Activated B cell treated with CpG ODN at 0.5 μM for 24 hours (primary cell): ENCODE measurements at regions of chr1 and their contacts with region 1.

Region 1: DNA sequence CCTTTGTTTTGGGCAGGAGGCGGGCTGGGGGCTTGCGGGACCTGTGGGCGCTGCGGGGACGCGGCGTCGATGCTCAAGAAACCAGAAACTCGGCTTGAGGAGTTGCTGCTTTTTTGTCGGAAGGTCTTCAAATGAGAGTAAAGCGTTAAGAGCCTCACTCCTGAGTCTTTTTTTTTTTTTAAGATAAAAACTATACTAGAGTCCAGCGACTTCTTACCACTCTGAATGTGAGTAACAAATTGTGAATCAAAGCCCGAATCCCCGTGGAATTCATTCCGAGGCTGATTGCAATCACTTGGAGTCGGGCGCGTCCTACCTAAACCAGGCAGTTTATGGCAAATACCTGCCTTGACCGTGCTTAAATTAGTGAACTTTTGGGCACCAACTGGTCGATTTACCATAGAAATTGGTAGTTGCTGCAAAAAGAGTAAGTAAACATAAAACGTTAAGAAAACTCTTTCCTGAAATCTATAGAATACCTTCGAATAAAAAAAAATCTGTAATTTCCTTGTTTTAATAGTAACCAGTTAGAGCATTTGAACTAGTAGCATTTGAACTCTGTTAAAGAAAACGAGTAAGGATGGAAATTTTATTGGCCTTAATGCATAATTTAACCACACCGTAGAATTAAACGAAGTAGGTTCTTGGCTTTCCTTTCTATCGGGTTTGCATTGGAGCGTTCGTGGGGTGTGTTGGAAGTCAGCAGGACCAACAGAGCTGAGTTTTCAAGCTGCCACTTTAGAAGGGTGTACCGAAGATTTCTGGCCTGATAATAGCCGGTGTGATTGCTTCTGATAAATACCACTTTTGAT is 769 bp downstream of the GPSM2 start:
- DNase-seq: no peak
- ATAC-seq: no peak
- H3K4me3 Mint-ChIP-seq: peak overlapping the region; percentile 97
- H3K27ac Mint-ChIP-seq: peak overlapping the region; percentile 85
- H3K4me1 Mint-ChIP-seq: peaks cover 13% of the 10 kb centered on the region
- H3K27me3 Mint-ChIP-seq: no peaks in the 10 kb centered on the region
- CTCF ChIP-seq: no peak

Region 2: DNA sequence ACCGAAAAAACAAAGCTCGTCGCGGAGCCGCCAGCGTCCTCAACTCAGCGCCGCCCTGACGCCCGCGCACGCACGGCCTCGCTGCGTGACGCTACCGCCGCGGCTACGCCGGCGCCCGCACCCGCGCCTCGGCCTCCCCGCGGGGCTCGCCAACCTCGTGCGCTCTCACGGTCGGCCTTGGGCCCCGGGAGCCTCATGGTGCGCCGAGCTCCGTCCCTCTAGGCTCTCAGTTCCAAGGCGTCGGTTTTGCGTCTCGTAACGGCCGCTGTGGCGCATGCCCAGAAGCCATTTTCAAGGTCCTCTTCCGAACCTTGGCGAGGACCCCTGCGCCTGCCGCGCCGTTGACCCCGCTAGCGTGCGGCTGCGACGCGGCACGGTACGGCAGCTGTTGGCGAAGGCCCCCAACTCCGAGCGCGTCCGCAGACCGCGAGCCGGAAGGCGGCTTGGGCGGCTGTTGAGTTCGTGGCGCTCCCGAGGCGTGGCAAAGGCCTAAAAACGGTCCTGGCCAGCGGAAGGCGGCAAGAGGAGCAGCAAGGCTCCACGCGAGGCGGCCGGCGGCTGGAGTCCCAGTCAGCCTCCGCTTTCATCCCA is 216.4 kb before region 1 on chr1 and contains the start of gene HENMT1:
- CTCF ChIA-PET with region 1: no interaction called
- POLR2A ChIA-PET with region 1: no interaction called
- intact Hi-C with region 1: loop called (anchors 5 kb)
- DNase-seq: peak; percentile 75
- ATAC-seq: peak; percentile 82
- H3K4me3 Mint-ChIP-seq: peak within 1 kb of the TSS; percentile 86
- H3K27ac Mint-ChIP-seq: peak within 1 kb of the TSS; percentile 90
- H3K4me1 Mint-ChIP-seq: peaks cover 12% of the 10 kb centered on the region
- H3K27me3 Mint-ChIP-seq: no peaks in the 10 kb centered on the region
- CTCF ChIP-seq: no peak
- total RNA-seq, gene HENMT1: 6.1 and 6.4 TPM in 2 replicates

Region 3: DNA sequence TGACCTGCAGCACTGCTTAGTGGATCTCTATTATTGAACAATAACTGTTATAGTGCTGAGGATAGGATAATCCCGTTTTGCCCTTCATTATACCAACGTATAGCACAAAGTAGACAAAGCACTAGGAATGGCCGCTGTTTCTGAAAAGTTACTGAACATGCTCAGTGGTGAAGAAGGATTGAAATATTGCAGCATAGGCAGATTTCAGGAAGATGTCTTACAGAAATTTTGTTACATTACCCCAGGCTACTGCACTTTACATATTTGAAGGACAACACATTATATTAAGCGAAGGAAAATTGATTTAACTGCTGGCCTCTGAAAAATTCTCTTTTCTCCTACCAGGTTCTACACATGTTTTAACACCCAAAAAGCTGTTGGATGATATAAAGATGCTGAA is 69.1 kb before region 1 on chr1:
- CTCF ChIA-PET with region 1: no interaction called
- POLR2A ChIA-PET with region 1: no interaction called
- intact Hi-C with region 1: loop called (anchors 5 kb)
- DNase-seq: no peak
- ATAC-seq: no peak
- H3K4me3 Mint-ChIP-seq: no peak overlapping the region
- H3K27ac Mint-ChIP-seq: no peak overlapping the region
- H3K4me1 Mint-ChIP-seq: no peaks in the 10 kb centered on the region
- H3K27me3 Mint-ChIP-seq: no peaks in the 10 kb centered on the region
- CTCF ChIP-seq: no peak

Region 4: GRCh38 chr1:108862698-108863477 is 14.7 kb before region 1 on chr1:
- CTCF ChIA-PET with region 1: no interaction called
- POLR2A ChIA-PET with region 1: no interaction called
- intact Hi-C with region 1: loop called (anchors 1 kb)
- DNase-seq: no peak
- ATAC-seq: peak; percentile 96
- H3K4me3 Mint-ChIP-seq: no peak overlapping the region
- H3K27ac Mint-ChIP-seq: peak overlapping the region; percentile 81
- H3K4me1 Mint-ChIP-seq: peaks cover 22% of the 10 kb centered on the region
- H3K27me3 Mint-ChIP-seq: peaks cover 1% of the 10 kb centered on the region
- CTCF ChIP-seq: no peak

Region 5: DNA sequence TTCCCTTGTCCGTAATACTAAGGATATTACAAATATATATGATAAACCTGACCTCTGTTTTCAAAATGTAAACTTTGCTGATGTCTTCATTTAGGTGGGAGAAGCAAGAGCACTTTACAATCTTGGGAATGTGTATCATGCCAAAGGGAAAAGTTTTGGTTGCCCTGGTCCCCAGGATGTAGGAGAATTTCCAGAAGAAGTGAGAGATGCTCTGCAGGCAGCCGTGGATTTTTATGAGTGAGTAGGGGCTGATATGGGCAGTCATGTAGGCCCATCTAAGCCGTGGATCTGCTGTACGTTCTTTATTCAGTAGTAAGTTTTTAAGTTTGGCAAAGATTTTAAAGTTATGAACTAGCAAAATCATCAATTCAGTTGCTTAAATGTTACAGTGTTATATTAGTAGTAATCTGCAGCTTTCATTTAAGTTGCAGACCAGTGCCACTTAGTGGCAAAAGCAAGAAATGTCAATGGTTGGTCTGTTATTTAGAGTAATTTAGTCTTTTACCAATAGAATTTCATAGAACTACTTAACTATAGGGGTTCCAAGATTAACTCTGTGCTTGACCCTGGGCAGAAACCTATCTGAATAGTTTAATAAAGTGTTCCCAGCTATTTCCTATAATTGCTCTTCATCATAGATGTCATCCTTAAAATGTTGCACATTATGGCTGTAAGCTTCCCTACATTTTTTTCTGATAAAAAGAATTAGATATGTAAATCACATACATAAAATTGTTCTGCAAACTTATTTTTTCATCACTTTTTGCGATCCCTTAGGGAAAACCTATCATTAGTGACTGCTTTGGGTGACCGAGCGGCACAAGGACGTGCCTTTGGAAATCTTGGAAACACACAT is 20.5 kb after region 1 on chr1:
- CTCF ChIA-PET with region 1: interaction called, 3 read pairs
- POLR2A ChIA-PET with region 1: no interaction called
- intact Hi-C with region 1: loop called (anchors 1 kb)
- DNase-seq: no peak
- ATAC-seq: peak; percentile 66
- H3K4me3 Mint-ChIP-seq: no peak overlapping the region
- H3K27ac Mint-ChIP-seq: no peak overlapping the region
- H3K4me1 Mint-ChIP-seq: no peaks in the 10 kb centered on the region
- H3K27me3 Mint-ChIP-seq: no peaks in the 10 kb centered on the region
- CTCF ChIP-seq: peak; percentile 36

Region 6: DNA sequence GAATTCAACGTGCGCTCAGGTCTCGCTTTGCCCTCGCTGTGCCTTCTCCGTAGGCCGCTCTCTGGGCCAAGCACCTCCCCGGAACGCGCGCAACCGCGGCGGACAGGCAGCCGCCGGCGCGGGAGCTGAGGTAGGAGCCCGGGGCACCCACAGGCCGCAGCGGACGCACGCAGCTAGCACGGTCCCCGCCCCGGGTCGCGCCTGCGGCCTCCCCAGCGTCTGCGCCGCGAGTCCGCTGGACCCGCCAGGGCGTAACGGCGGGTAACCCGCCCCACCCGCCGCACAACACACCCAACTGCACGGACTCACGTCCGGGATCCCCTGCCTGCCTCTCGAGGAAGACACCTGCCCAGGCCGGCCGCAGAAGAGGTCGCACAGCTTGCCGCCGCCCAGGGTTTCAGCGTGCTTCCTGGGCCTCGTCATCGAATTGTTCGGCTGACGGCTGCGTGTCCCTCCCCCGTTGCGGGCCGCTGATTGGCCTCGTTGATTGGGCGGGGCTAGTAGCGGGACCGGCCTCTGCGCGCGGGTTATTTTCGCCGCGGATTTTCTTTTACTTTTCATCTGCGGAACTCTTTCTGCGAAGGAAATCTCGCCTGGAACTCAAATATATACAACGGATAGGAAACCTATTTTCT is 85.6 kb after region 1 on chr1 and contains the start of gene CLCC1:
- CTCF ChIA-PET with region 1: no interaction called
- POLR2A ChIA-PET with region 1: no interaction called
- intact Hi-C with region 1: loop called (anchors 2 kb)
- DNase-seq: peak; percentile 84
- ATAC-seq: peak; percentile 94
- H3K4me3 Mint-ChIP-seq: peak within 1 kb of the TSS; percentile 88
- H3K27ac Mint-ChIP-seq: peak within 1 kb of the TSS; percentile 91
- H3K4me1 Mint-ChIP-seq: peaks cover 35% of the 10 kb centered on the region
- H3K27me3 Mint-ChIP-seq: no peaks in the 10 kb centered on the region
- CTCF ChIP-seq: no peak
- total RNA-seq, gene CLCC1: 19.5 and 28.3 TPM in 2 replicates

Region 7: GRCh38 chr1:109050266-109050995 is 172.9 kb after region 1 on chr1:
- CTCF ChIA-PET with region 1: no interaction called
- POLR2A ChIA-PET with region 1: no interaction called
- intact Hi-C with region 1: no loop called
- DNase-seq: no peak
- ATAC-seq: no peak
- H3K4me3 Mint-ChIP-seq: no peak overlapping the region
- H3K27ac Mint-ChIP-seq: no peak overlapping the region
- H3K4me1 Mint-ChIP-seq: no peaks in the 10 kb centered on the region
- H3K27me3 Mint-ChIP-seq: no peaks in the 10 kb centered on the region
- CTCF ChIP-seq: no peak

Region 8: GRCh38 chr1:109112652-109113285 is 235.2 kb after region 1 on chr1:
- CTCF ChIA-PET with region 1: no interaction called
- POLR2A ChIA-PET with region 1: no interaction called
- intact Hi-C with region 1: loop called (anchors 5 kb)
- DNase-seq: peak; percentile 83
- ATAC-seq: peak; percentile 75
- H3K4me3 Mint-ChIP-seq: peak overlapping the region; percentile 77
- H3K27ac Mint-ChIP-seq: peak overlapping the region; percentile 56
- H3K4me1 Mint-ChIP-seq: peaks cover 25% of the 10 kb centered on the region
- H3K27me3 Mint-ChIP-seq: peaks cover 27% of the 10 kb centered on the region
- CTCF ChIP-seq: peak; percentile 88